PC-3 (cell line): ENCODE measurements at regions of chr18 and their contacts with region 1.

Region 1: DNA sequence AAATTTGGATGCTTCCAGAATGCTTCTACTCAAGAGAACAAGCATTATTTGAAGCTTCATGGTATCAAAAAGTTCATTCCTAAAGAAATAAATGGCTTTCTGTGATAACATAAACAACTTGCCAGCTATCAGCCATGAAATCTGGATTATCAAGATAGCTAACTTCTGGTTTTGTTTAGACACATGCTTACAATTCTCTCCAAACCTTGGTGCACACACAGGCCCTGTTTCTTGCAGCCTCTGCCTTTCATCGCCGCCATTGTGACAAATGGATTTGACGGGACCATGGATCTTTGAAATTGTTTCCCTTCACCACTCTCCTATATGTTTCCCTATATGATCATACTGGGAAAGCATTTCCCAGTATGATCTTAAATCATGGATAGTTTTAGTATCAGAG is 47.9 kb upstream of the CABLES1 start:
- DNase-seq: no peak
- ATAC-seq: no peak
- H3K4me3 ChIP-seq: no peak overlapping the region
- H3K27ac ChIP-seq: no peak overlapping the region
- H3K4me1 ChIP-seq: no peaks in the 10 kb centered on the region
- H3K27me3 ChIP-seq: no peaks in the 10 kb centered on the region
- CTCF ChIP-seq: no peak

Region 2: DNA sequence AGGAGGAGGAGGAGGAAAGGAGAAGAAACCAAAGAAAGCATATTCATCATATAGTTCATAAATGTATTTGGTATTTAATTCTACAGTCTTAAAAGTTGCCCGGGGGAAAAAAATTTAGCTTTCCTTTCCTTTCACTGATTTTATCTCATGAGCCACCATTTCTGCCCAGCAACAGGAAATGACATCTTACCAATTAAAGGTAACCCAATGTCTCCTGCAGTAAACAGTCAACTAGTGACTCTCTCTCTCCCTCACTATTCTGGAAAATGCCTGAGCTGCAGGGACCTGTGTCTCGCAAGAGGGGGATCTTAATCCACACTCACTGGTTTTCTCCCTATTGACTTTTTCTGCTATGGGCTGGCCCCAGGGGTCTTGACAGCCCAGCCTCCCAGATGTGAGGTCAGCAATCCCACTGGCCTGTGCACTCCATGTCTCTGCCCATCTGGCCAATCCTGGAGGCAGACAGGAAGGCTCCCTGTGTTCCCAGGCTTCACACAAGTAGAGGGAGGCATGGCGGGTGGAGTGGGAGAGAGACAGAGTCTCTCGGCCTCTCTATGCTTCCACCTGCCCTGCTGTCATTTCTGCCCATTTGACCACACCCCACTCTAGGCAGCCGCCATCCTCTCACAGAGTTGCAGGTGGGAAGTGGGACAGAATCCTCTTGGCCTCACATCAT is 37.5 kb before region 1 on chr18:
- CTCF ChIA-PET with region 1: no interaction called
- POLR2A ChIA-PET with region 1: interaction called, 11 read pairs
- intact Hi-C with region 1: no loop called
- DNase-seq: no peak
- ATAC-seq: no peak
- H3K4me3 ChIP-seq: no peak overlapping the region
- H3K27ac ChIP-seq: no peak overlapping the region
- H3K4me1 ChIP-seq: peaks cover 8% of the 10 kb centered on the region; the same call in 1 of the 2 replicates
- H3K27me3 ChIP-seq: no peaks in the 10 kb centered on the region
- CTCF ChIP-seq: no peak